ENCODE measurements at regions of chr22 and their contacts with region 1.

Region 1: GRCh38 chr22:43060183-43060582 is 29.0 kb downstream of the TTLL1 start:
- H3K4me3 ChIP-seq: no peak overlapping the region
- H3K27ac ChIP-seq: no peak overlapping the region
- H3K4me1 ChIP-seq: no peaks in the 10 kb centered on the region
- CTCF ChIP-seq: peak; percentile 82

Region 2: GRCh38 chr22:42856865-42857704 is 203.1 kb before region 1 on chr22 and contains the start of gene ARFGAP3:
- CTCF ChIA-PET with region 1: interaction called, 10 read pairs
- POLR2A ChIA-PET with region 1: no interaction called
- H3K4me3 ChIP-seq: peak within 1 kb of the TSS; percentile 76
- H3K27ac ChIP-seq: peak within 1 kb of the TSS; percentile 81
- H3K4me1 ChIP-seq: peaks cover 14% of the 10 kb centered on the region
- CTCF ChIP-seq: no peak

Region 3: DNA sequence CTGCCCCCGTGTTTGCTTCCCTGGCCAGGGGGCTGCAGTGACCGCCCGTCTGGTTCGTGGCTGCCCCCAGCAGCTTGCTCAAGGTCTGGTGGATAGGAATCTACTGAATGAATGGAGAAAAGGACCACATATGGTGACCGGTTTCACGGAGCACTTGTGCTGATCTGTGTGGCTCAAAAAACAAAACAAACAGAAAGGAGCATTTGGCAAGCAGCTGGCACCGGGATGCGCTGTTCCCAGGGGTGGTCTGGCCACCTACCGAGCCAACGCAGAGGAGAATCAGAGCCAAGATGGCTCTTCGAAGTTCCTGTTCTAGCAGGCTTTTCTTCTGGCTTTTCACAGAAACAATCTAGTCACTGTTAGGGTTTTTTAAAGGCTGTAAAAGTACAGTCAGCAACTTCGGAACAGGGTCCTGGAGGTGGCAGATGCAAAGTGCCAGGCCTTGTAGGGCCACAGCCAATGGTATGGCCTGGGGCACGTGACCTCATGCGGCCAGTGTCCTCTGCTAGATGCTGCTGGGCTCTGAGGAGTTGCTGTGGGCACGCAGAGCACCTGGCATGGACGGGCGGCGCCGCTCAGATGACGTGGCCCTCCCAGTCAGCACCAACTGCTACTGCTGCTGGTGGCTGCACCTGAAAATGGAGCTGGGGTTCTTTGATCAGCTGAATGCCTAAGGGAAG is 17.9 kb before region 1 on chr22:
- CTCF ChIA-PET with region 1: interaction called, 10 read pairs
- POLR2A ChIA-PET with region 1: interaction called, 4 read pairs
- H3K4me3 ChIP-seq: no peak overlapping the region
- H3K27ac ChIP-seq: no peak overlapping the region
- H3K4me1 ChIP-seq: no peaks in the 10 kb centered on the region
- CTCF ChIP-seq: no peak

Region 4: DNA sequence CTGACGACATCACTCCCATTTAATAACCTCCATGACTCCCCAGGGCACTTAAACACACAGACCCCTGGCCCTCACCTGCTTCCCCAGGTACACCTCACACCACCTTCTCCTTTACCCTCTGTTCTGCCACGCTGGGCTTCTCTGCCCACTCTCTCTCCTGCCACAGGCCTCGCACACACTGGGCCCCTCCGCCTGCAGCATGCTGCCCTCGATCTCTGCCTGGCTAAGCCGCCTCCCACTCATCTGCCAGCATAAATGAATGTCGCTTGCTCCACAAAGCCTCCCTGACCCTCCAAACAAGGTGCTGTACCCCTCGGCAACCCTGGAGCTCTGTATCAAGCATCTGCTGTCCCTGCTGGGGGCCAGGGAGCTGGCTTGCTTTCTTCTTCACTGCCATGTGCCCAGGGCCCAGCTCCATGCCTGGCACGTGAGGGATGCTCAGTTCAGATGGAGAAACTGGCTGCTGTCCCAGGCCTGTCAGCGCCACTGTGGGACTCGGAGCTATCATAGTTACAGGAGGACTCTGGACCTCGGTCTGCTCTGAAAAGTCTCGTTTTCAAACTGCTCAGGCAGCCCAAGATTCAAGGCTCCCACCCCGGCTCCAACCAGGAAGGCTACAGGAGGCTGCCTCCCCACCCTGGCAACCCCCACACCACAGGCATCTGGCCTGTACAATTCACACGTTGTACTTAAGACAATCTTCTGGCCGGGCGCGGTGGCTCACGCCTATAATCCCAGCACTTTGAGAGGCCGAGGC is 17.1 kb after region 1 on chr22:
- CTCF ChIA-PET with region 1: interaction called, 7 read pairs
- POLR2A ChIA-PET with region 1: interaction called, 15 read pairs
- H3K4me3 ChIP-seq: no peak overlapping the region
- H3K27ac ChIP-seq: no peak overlapping the region
- H3K4me1 ChIP-seq: no peaks in the 10 kb centered on the region
- CTCF ChIP-seq: no peak

Region 5: DNA sequence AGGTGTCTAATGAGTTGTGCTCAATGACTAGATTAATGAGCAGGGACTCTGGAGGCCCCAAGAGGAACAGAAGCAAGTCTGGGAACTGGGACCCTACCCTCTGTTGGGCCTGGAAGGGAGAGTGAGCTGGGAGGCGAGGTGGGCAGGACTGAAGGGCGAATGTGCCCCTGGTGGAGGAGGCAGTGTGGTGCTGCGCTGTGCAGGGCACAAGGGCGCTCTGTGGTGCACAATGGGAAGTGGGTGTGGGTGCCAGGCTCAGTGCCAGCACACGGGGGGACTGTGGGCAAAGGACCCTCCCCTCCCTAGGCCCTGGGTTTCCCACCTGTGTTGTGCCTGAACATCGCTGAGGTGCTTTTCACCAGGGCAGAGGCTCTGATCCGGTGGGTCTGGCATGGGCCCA is 184.2 kb after region 1 on chr22:
- CTCF ChIA-PET with region 1: no interaction called
- POLR2A ChIA-PET with region 1: no interaction called
- H3K4me3 ChIP-seq: no peak overlapping the region
- H3K27ac ChIP-seq: no peak overlapping the region
- H3K4me1 ChIP-seq: no peaks in the 10 kb centered on the region
- CTCF ChIP-seq: no peak

Region 6: GRCh38 chr22:43273902-43274484 is 213.8 kb after region 1 on chr22:
- CTCF ChIA-PET with region 1: no interaction called
- POLR2A ChIA-PET with region 1: no interaction called
- H3K4me3 ChIP-seq: no peak overlapping the region
- H3K27ac ChIP-seq: no peak overlapping the region
- H3K4me1 ChIP-seq: peaks cover 13% of the 10 kb centered on the region
- CTCF ChIP-seq: peak; percentile 78

Measured in HEK293 (cell line).